ENCODE measurements at regions of chr2 and their contacts with region 1.

Region 1: DNA sequence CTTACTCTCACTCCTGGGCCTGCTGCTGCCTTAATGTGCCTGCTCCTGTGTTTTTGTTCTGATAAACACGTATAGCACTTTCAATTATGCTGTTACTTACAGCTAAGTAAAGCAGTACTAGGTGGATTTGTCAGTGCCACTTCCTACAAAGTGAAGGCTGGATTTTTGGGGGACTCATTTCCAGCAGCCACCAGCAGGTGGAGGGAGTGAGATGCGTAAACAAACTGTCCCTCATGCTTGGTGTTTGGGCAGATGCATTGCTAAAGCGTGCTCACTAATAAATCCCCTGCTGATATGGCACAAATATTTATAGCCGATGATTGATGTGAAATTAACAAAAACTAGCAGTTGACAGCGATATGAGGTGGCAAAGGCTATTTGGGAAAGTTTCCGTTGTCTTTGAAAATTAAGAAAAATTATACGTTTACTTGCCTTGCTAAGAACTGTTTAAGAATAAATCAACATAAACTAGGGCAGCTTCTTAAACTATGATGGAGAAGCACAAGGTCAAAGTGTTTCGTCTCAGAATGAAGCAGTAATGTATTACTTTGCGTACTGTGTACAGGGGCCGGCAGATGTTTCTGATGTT is 101.7 kb downstream of the AGAP1 start:
- DNase-seq: peak; percentile 83
- H3K4me3 ChIP-seq: no peak overlapping the region; a peak in 1 of 4 replicates
- H3K27ac ChIP-seq: no peak overlapping the region
- H3K4me1 ChIP-seq: peaks cover 0 to 4% of the 10 kb centered on the region in 2 experiments; a peak in 1 of 4 replicates
- H3K27me3 ChIP-seq: no peaks in the 10 kb centered on the region
- CTCF ChIP-seq: peak; percentile 90
- EP300 ChIP-seq: no peak
- RAD21 ChIP-seq: peak; percentile 96

Region 2: DNA sequence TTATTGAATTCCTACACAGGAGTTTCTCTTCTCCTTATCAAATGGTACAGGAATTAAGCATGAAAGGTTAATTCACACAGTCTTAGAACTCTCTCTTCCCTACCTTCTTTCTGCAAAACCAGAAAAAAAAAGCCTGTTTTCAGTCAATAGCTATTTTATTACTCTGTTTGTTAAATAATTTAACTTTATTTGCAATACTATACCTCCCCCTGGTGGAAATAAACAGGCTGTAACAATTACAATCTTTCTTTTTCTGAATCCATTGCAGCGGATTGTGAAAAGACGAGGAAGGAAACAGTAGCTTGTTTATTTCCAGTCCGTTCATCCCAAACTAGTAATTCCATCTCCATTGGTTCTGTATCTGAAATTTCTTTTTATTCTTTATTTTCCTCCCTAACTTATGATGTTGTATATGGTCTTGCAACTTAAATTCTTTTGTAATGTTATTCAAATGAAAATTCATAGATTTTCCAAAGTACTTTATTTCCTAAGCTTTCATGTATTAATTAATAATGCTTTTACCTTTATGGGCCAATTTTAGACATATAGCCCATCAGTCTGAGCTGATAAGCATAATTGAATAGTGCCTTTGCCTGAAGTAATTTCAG is 478.5 kb before region 1 on chr2:
- CTCF ChIA-PET with region 1: interaction called, 15 read pairs
- POLR2A ChIA-PET with region 1: no interaction called
- DNase-seq: peak; percentile 51
- H3K4me3 ChIP-seq: no peak overlapping the region; a peak in 1 of 4 replicates
- H3K27ac ChIP-seq: no peak overlapping the region
- H3K4me1 ChIP-seq: no peaks in the 10 kb centered on the region
- H3K27me3 ChIP-seq: no peaks in the 10 kb centered on the region
- CTCF ChIP-seq: peak; percentile 83
- EP300 ChIP-seq: no peak
- RAD21 ChIP-seq: peak; percentile 87

Region 3: GRCh38 chr2:235495373-235496238 is 99.9 kb before region 1 on chr2:
- CTCF ChIA-PET with region 1: interaction called, 15 read pairs
- POLR2A ChIA-PET with region 1: no interaction called
- DNase-seq: no peak
- H3K4me3 ChIP-seq: peak overlapping the region; percentile 72 to 77
- H3K27ac ChIP-seq: no peak overlapping the region
- H3K4me1 ChIP-seq: peaks cover 13 to 28% of the 10 kb centered on the region in 2 experiments; a peak in 2 of 4 replicates
- H3K27me3 ChIP-seq: no peaks in the 10 kb centered on the region
- CTCF ChIP-seq: no peak
- EP300 ChIP-seq: no peak
- RAD21 ChIP-seq: no peak

Region 4: DNA sequence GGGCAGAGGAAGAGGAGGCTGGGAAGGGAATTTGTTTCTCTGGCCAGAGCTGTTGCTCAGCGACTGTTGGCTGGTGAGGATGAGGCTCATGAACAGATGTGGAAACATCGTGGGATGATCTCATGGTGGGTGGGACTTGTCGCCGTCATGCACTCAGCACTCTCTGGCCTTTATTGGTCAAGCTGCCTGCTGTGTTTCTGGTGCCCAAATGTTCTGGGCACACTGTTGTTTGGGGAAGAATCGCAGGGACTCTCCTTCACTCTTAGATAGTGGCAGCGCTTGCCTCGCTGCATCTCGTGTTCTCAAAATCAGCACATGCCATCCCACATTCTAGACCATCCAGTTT is 43.9 kb after region 1 on chr2:
- CTCF ChIA-PET with region 1: interaction called, 19 read pairs
- POLR2A ChIA-PET with region 1: interaction called, 3 read pairs
- DNase-seq: peak; percentile 73
- H3K4me3 ChIP-seq: no peak overlapping the region
- H3K27ac ChIP-seq: peak overlapping the region; percentile 27 to 87; a peak in 3 of 4 replicates
- H3K4me1 ChIP-seq: peaks cover 16 to 55% of the 10 kb centered on the region in 2 experiments
- H3K27me3 ChIP-seq: no peaks in the 10 kb centered on the region
- CTCF ChIP-seq: no peak
- EP300 ChIP-seq: no peak
- RAD21 ChIP-seq: 0 out of 2 replicates have a peak, but pooled peaks have one; percentile 12

Region 5: DNA sequence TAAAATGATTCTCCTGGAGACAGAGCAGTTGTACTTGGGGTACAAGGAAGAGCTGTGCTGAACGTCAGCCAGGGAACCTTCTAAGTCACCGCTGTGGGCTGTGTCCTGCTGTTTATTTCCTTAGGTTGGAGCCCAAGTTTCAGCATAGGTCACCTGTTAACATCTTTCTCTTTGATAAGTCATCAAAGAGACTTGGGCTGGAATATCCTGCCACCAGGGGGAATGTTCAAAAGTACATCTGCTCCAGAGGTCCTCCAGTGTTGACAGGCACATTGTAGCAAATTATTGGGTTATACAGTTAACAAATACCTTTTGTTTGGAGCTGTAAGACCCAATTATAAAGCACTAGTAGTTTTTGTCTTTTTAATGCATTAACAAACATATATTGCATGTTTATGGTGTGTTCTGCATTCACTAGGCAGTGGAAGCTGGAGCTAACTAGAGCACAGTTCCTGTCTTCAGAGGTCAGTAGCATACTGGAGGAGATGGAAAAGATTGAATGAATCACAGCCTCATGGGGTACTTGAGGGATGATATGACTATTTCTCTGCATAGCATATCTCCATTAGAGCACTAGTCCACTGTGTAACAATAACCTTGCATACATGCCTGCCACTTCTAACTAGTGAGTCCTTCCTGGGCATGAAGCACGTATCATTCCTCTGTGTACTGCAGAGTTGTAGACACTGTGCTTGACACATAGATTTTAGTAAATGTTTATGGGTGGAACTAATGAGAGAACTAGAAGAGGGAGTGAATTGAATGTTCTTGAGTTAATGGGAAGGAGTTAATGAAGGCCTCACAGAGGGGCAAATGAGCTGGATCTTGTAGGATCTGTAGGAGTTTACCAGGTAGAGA is 80.4 kb after region 1 on chr2:
- CTCF ChIA-PET with region 1: interaction called, 121 read pairs
- POLR2A ChIA-PET with region 1: no interaction called
- DNase-seq: no peak
- H3K4me3 ChIP-seq: no peak overlapping the region
- H3K27ac ChIP-seq: no peak overlapping the region
- H3K4me1 ChIP-seq: peaks cover 0 to 32% of the 10 kb centered on the region in 2 experiments; a peak in 2 of 4 replicates
- H3K27me3 ChIP-seq: no peaks in the 10 kb centered on the region
- CTCF ChIP-seq: peak; percentile 27; the same call in 1 of the 2 replicates
- EP300 ChIP-seq: no peak
- RAD21 ChIP-seq: no peak

Region 6: DNA sequence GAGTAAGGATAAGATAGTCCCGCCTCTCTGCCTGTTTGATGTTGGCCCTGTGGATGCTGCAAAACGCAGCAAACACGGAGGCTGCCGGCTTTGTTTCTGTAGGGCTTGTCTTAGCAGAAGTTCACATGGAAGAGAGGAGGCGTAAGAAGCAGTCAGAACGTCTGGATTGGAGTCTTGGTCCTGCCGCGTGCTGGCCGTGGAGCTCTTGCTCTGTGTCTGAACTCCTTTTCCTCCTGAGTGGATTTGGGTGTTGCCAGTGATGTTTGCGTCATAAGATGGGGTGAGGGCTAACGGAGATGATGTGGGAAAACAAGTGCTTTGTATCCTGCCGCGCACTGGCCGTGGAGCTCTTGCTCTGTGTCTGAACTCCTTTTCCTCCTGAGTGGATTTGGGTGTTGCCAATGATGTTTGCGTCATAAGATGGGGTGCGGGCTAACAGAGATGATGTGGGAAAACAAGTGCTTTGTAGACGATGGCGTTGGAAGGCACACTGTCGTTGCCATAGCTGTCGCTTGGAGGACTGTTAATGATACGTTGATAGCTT is 139.2 kb after region 1 on chr2:
- CTCF ChIA-PET with region 1: interaction called, 301 read pairs
- POLR2A ChIA-PET with region 1: no interaction called
- DNase-seq: no peak
- H3K4me3 ChIP-seq: no peak overlapping the region
- H3K27ac ChIP-seq: no peak overlapping the region
- H3K4me1 ChIP-seq: peaks cover 0 to 4% of the 10 kb centered on the region in 2 experiments; a peak in 1 of 4 replicates
- H3K27me3 ChIP-seq: no peaks in the 10 kb centered on the region
- CTCF ChIP-seq: no peak
- EP300 ChIP-seq: no peak
- RAD21 ChIP-seq: no peak

Measured in SK-N-SH (cell line).